ENCODE measurements at regions of chr6 and their contacts with region 1.

Region 1: DNA sequence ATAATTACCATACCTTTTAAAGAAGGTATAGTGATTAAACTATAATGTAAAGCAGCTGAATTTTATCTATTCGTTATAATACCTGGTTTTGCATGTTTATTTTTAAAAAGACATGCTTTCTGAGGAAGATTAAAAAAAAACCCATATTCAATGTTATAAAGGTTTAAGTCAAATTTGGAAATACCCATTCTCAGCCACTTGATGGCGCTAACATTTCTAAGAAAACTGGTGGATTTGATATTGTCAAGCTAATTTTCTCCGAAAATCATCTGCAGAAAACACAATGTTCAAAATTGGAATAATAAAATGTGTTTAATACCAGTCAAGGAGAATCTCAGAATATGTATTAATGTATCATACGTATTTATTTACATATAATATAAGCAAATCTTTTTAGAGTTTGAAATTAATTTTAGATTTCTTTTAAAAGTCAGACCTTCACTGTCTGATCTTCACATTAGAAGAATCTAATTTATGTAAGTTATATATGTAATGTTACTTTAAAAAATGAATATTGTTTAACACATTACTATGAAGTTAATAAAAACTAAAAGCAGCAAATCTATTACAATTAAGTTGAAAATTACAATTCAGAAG is 35.0 kb downstream of the SHPRH start:
- DNase-seq: peak in 4 of 5 donors; percentile 13 to 28 (median 20)
- H3K4me3 ChIP-seq: no peak overlapping the region
- H3K4me3 Mint-ChIP-seq: no peak overlapping the region
- H3K27ac ChIP-seq: no peak overlapping the region
- H3K27ac Mint-ChIP-seq: no peak overlapping the region
- H3K4me1 ChIP-seq: no peaks in the 10 kb centered on the region
- H3K4me1 Mint-ChIP-seq: no peaks in the 10 kb centered on the region
- H3K27me3 ChIP-seq: no peaks in the 10 kb centered on the region
- H3K27me3 Mint-ChIP-seq: no peaks in the 10 kb centered on the region

Region 2: DNA sequence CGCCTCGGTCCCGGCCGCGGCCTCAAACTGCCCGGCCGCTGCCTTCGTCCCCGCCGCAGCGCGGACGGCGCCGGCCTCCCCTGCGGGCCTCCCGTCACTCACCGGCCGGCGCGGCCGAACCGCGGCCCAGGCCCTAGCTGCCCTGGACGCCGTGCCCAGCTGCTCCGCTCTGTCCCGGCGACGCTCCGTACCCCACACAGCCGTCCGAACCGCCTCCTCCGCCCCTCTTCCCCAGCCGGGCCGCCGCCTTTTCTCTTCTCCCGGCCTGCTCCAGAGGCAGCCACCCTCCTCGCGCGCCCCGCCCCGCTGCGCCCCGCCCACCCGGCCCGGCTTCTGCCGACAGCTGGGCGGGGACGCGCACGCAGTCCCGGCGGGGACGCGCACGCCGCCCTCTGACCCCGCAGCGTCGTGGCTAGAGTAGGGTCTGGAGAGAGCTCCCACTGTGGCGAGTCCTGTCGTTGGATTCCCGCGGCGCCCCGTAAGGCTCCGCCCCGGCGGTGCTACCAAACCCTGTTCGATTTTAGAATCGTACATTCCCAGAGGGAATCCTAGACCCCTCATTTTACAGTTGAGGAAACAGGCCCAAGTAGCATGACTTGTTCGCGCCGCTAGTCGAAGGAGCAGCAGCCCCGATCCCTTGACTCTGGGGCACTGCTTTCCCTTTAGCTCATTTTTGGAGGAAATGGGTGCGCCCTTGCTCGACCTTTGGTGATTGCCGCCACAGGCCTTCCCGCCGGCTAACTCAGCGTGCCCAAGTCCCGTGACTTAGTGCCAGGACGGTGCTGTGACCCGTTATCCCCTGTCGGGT is 114.4 kb before region 1 on chr6 and contains the start of gene FBXO30:
- CTCF ChIA-PET with region 1: interaction called, 11 read pairs
- POLR2A ChIA-PET with region 1: no interaction called
- intact Hi-C with region 1: no loop called
- DNase-seq: peak; percentile 85 to 92 (median 88)
- H3K4me3 ChIP-seq: peak within 1 kb of the TSS; percentile 74 to 79
- H3K4me3 Mint-ChIP-seq: peak within 1 kb of the TSS; percentile 93 to 98 (median 95)
- H3K27ac ChIP-seq: peak within 1 kb of the TSS; percentile 86
- H3K27ac Mint-ChIP-seq: peak within 1 kb of the TSS; percentile 96 to 97 (median 96)
- H3K4me1 ChIP-seq: peaks cover 51% of the 10 kb centered on the region
- H3K4me1 Mint-ChIP-seq: peaks cover 26 to 60% (median 30%) of the 10 kb centered on the region in 4 donors
- H3K27me3 ChIP-seq: no peaks in the 10 kb centered on the region
- H3K27me3 Mint-ChIP-seq: no peaks in the 10 kb centered on the region
- total RNA-seq, gene FBXO30: 7.5 to 8.0 TPM

Region 3: DNA sequence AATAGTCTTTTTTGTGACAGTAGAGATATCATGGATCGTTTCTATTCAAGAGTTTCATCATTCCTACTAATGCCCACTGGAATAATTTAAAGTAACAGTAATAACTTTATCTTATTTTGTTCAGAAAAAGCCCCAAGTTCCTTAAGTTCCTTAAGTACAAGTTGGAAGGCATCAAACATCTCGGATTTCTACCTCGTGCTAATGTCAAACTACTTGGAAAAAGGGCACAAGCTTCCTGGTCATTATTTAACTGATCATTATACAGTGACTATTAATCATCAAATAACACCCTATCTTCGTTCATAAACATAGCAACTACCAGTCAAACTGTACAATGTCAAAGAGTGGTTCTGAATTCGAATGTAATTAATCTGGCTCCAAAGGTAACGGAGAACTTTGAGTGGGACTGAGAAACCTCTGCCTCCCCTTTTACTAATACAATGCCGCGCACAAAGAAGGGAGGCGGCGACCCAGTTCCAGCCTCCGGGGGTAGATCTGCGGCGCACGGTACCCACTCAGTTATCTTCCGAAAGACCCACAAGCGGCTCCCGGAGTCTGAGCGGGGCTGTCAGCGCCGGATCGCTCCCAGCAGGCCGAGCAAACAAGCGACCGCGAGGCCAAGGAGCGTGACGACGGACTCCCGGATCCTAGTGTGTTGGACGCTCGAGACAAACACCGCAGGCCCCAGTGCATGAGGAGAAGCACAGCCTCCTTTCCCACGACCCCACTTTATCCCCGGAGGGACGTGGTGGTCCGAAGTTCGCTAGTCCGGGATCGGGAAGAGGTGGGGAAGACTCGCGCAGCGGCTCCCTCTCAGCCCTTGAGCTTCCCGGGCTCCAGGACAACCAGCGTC is 34.3 kb after region 1 on chr6:
- CTCF ChIA-PET with region 1: interaction called, 13 read pairs
- POLR2A ChIA-PET with region 1: no interaction called
- intact Hi-C with region 1: no loop called
- DNase-seq: peak in 3 of 5 donors; percentile 23 to 46 (median 38)
- H3K4me3 ChIP-seq: peak overlapping the region; percentile 76 to 95
- H3K4me3 Mint-ChIP-seq: peak overlapping the region; percentile 96 to 99 (median 98)
- H3K27ac ChIP-seq: peak overlapping the region; percentile 67
- H3K27ac Mint-ChIP-seq: peak overlapping the region; percentile 92 to 99 (median 99)
- H3K4me1 ChIP-seq: peaks cover 43% of the 10 kb centered on the region
- H3K4me1 Mint-ChIP-seq: peaks cover 30 to 67% (median 47%) of the 10 kb centered on the region in 4 donors
- H3K27me3 ChIP-seq: no peaks in the 10 kb centered on the region
- H3K27me3 Mint-ChIP-seq: no peaks in the 10 kb centered on the region

Region 4: GRCh38 chr6:146032387-146032786 is 103.3 kb after region 1 on chr6:
- CTCF ChIA-PET with region 1: no interaction called
- POLR2A ChIA-PET with region 1: no interaction called
- intact Hi-C with region 1: no loop called
- DNase-seq: no peak
- H3K4me3 ChIP-seq: no peak overlapping the region
- H3K4me3 Mint-ChIP-seq: no peak overlapping the region
- H3K27ac ChIP-seq: no peak overlapping the region
- H3K27ac Mint-ChIP-seq: peak overlapping the region in 1 of 7 donors; percentile 26
- H3K4me1 ChIP-seq: no peaks in the 10 kb centered on the region
- H3K4me1 Mint-ChIP-seq: peaks cover 0 to 27% (median 7%) of the 10 kb centered on the region in 4 donors
- H3K27me3 ChIP-seq: peaks cover 16% of the 10 kb centered on the region
- H3K27me3 Mint-ChIP-seq: peaks cover 28% of the 10 kb centered on the region in 2 donors

Region 5: DNA sequence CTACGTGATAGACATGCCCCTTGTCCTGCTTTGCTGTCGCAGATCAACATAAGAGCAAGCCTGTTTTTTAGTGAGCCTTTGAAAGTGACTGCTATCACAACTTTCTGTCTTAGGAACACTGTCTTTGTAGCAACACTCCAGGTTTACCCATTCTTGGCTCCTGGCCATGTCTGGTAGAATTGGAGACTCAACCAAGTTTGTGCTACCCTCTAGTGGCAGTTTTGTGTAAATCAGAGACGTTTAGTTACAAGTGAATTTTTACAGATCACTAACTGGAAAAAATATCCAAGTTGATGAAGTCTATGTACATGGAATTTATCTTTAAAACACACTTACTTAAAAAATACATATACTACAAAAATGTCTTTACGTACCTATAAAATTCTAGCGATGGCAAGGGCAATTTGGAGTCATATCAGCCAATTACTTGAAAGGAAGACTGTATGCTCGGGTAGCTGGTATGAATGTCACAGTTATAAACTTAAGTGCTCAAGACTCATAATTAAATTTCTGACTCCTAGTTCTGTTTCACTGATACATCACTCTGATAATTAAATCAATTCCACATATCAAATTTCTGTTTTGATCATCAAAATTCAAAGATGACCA is 771.0 kb after region 1 on chr6:
- CTCF ChIA-PET with region 1: no interaction called
- POLR2A ChIA-PET with region 1: no interaction called
- intact Hi-C with region 1: loop called (anchors 1 kb)
- DNase-seq: peak; percentile 30 to 50 (median 40)
- H3K4me3 ChIP-seq: no peak overlapping the region
- H3K4me3 Mint-ChIP-seq: no peak overlapping the region
- H3K27ac ChIP-seq: no peak overlapping the region
- H3K27ac Mint-ChIP-seq: peak overlapping the region in 1 of 7 donors; percentile 57
- H3K4me1 ChIP-seq: no peaks in the 10 kb centered on the region
- H3K4me1 Mint-ChIP-seq: no peaks in the 10 kb centered on the region
- H3K27me3 ChIP-seq: no peaks in the 10 kb centered on the region
- H3K27me3 Mint-ChIP-seq: peaks cover 0 to 1% of the 10 kb centered on the region in 2 donors

Region 6: GRCh38 chr6:146770965-146771735 is 842.0 kb after region 1 on chr6:
- CTCF ChIA-PET with region 1: interaction called, 5 read pairs
- POLR2A ChIA-PET with region 1: no interaction called
- intact Hi-C with region 1: loop called (anchors 1 kb)
- DNase-seq: peak; percentile 41 to 69 (median 63)
- H3K4me3 ChIP-seq: peak overlapping the region; percentile 3 to 20
- H3K4me3 Mint-ChIP-seq: peak overlapping the region; percentile 70 to 86 (median 78)
- H3K27ac ChIP-seq: no peak overlapping the region
- H3K27ac Mint-ChIP-seq: peak overlapping the region; percentile 14 to 88 (median 52)
- H3K4me1 ChIP-seq: peaks cover 27% of the 10 kb centered on the region
- H3K4me1 Mint-ChIP-seq: peaks cover 18 to 24% (median 21%) of the 10 kb centered on the region in 4 donors
- H3K27me3 ChIP-seq: no peaks in the 10 kb centered on the region
- H3K27me3 Mint-ChIP-seq: no peaks in the 10 kb centered on the region

Measured in CD4-positive, alpha-beta memory T cell (primary cell).